ENCODE measurements at regions of chr2 and their contacts with region 1.

Region 1: GRCh38 chr2:172128484-172128883 is 25.8 kb upstream of the DLX2 start:
- DNase-seq: no peak
- ATAC-seq: no peak
- H3K4me3 ChIP-seq: no peak overlapping the region
- H3K4me3 Mint-ChIP-seq: no peak overlapping the region
- H3K27ac ChIP-seq: no peak overlapping the region
- H3K27ac Mint-ChIP-seq: no peak overlapping the region
- H3K4me1 ChIP-seq: no peaks in the 10 kb centered on the region
- H3K4me1 Mint-ChIP-seq: no peaks in the 10 kb centered on the region
- H3K27me3 ChIP-seq: no peaks in the 10 kb centered on the region
- H3K27me3 Mint-ChIP-seq: peaks cover 2% of the 10 kb centered on the region
- CTCF ChIP-seq: no peak

Region 2: GRCh38 chr2:171811245-171811628 is 317.2 kb before region 1 on chr2:
- CTCF ChIA-PET with region 1: interaction called, 3 read pairs
- POLR2A ChIA-PET with region 1: no interaction called
- intact Hi-C with region 1: loop called (anchors 1 to 5 kb)
- DNase-seq: peak in 2 of 9 experiments; percentile 22 to 44
- ATAC-seq: no peak
- H3K4me3 ChIP-seq: no peak overlapping the region
- H3K4me3 Mint-ChIP-seq: no peak overlapping the region
- H3K27ac ChIP-seq: no peak overlapping the region
- H3K27ac Mint-ChIP-seq: no peak overlapping the region
- H3K4me1 ChIP-seq: no peaks in the 10 kb centered on the region
- H3K4me1 Mint-ChIP-seq: no peaks in the 10 kb centered on the region
- H3K27me3 ChIP-seq: no peaks in the 10 kb centered on the region
- H3K27me3 Mint-ChIP-seq: no peaks in the 10 kb centered on the region
- CTCF ChIP-seq: peak; percentile 23